Endothelial cell of umbilical vein (primary cell): ENCODE measurements at regions of chr5 and their contacts with region 1.

Region 1: GRCh38 chr5:102778478-102778877 is 23.4 kb downstream of the PAM start:
- DNase-seq: peak; percentile 87
- H3K4me3 ChIP-seq: no peak overlapping the region
- H3K27ac ChIP-seq: peak overlapping the region; percentile 11
- H3K4me1 ChIP-seq: peaks cover 21% of the 10 kb centered on the region
- H3K27me3 ChIP-seq: no peaks in the 10 kb centered on the region
- CTCF ChIP-seq: no peak
- POLR2A ChIP-seq: no peak

Region 2: DNA sequence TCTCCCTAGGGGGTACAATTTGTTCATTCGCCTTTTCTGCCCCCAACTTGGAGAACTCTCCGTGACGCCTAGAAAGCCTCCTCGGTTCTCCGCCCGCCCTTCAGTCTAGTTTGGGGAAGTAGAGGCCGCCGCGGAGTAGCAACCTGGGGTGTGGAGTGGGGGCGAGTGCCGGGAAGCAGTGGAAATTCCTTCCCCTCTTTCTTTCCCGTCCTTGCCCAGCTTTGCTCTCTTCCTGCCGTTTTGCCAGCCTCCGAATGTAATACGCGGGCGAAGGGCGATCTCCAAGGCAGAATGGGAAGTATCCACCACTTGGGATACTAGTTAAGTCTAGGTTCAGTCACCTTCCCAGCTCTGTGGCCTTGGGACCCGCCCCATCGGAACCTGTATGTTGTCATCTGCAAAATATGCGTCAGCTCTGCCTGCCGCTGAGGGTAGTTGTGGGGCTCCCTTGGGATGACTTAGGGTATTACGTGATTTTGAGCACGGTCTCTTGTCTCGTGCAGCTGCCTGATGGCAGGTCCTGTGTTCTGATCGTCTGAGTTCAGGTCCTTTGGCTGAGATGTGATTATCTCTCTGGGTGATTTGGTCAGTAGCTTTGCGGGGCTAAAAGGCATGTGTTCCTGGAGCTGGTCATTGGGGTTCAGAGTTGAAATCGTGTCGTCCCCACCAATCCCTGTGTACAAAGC is 22.6 kb before region 1 on chr5:
- CTCF ChIA-PET with region 1: interaction called, 18 read pairs
- POLR2A ChIA-PET with region 1: interaction called, 3 read pairs
- dilution Hi-C with region 1: no loop called
- intact Hi-C with region 1: loop called (anchors 1 kb)
- DNase-seq: peak; percentile 78
- H3K4me3 ChIP-seq: peak overlapping the region; percentile 73 to 90 (median 86)
- H3K27ac ChIP-seq: peak overlapping the region; percentile 81
- H3K4me1 ChIP-seq: peaks cover 15% of the 10 kb centered on the region
- H3K27me3 ChIP-seq: no peaks in the 10 kb centered on the region
- CTCF ChIP-seq: no peak
- POLR2A ChIP-seq: no peak

Region 3: GRCh38 chr5:102865510-102866236 is 87.2 kb after region 1 on chr5:
- CTCF ChIA-PET with region 1: interaction called, 11 read pairs
- POLR2A ChIA-PET with region 1: no interaction called
- dilution Hi-C with region 1: no loop called
- intact Hi-C with region 1: loop called (anchors 2 kb)
- DNase-seq: peak; percentile 80
- H3K4me3 ChIP-seq: peak overlapping the region; percentile 55 to 88 (median 60)
- H3K27ac ChIP-seq: peak overlapping the region; percentile 72
- H3K4me1 ChIP-seq: peaks cover 34% of the 10 kb centered on the region
- H3K27me3 ChIP-seq: no peaks in the 10 kb centered on the region
- CTCF ChIP-seq: no peak
- POLR2A ChIP-seq: peak; percentile 50

Region 4: GRCh38 chr5:103031607-103032006 is 253.1 kb after region 1 on chr5:
- CTCF ChIA-PET with region 1: interaction called, 21 read pairs
- POLR2A ChIA-PET with region 1: no interaction called
- dilution Hi-C with region 1: no loop called
- intact Hi-C with region 1: no loop called
- DNase-seq: no peak
- H3K4me3 ChIP-seq: no peak overlapping the region
- H3K27ac ChIP-seq: no peak overlapping the region
- H3K4me1 ChIP-seq: no peaks in the 10 kb centered on the region
- H3K27me3 ChIP-seq: no peaks in the 10 kb centered on the region
- CTCF ChIP-seq: peak; percentile 19 to 21
- POLR2A ChIP-seq: no peak

Region 5: DNA sequence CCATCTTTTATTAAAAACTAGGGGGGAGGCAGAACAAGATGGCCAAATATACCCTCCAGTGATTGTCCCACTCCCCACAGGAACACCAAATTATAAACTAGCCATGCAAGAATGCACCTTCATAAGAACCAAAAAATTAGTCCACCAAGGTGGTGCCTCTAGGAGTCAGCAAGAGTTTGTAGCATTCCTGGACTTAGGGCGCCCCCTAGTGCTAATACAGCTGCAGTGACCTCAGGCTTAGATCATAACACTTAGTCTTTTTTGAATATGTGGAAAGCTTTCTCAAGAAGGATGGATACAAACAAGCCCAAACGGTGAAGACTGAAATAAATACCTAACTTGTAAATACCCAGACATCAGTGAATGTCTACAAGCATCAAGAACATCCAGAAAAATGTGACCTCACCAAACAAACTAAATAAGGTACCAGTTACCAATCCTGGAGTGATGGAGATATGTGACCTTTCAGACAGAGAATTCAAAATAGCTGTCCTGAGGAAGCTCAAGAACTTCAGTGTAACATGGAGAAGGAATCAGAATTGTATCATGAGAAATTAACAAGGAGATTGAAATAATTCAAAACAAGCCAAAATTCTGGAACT is 360.9 kb after region 1 on chr5:
- CTCF ChIA-PET with region 1: interaction called, 7 read pairs
- POLR2A ChIA-PET with region 1: no interaction called
- dilution Hi-C with region 1: no loop called
- intact Hi-C with region 1: loop called (anchors 1 kb)
- DNase-seq: peak; percentile 69
- H3K4me3 ChIP-seq: no peak overlapping the region
- H3K27ac ChIP-seq: no peak overlapping the region
- H3K4me1 ChIP-seq: no peaks in the 10 kb centered on the region
- H3K27me3 ChIP-seq: no peaks in the 10 kb centered on the region
- CTCF ChIP-seq: peak; percentile 82 to 89
- POLR2A ChIP-seq: no peak